ENCODE measurements at regions of chr1 and their contacts with region 1.

Region 1: DNA sequence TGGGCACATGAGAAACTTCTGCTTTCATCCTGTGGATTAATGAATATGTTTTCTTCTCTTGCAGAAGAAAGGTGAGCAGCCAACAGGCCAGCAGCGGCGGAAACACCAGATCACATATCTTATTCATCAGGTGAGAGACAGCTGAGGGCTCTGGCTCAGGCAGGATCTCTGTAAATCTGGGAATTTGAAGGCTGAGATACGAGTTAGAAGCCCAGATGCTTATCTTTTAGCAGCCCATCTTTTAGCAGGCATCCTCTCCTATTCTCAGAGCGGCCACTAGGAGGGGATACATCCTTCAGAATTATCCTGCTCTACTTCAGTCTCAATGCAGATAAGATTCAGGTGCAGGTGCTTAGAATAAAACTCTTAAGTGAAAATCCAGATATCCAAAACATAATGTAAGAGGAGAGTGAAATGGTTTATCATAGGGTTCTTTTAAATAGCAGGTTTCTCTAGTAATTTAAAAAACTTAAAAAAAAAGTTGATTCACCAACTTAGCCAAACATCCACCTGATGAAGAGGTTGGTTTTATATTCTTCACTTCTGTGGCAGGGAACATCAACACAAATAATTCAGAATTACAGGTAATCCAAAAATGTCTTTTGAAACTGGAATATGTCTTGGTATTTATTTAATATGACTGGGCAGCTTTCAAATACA is 19.3 kb downstream of the SH2D2A start:
- DNase-seq: peak; percentile 61
- H3K4me3 ChIP-seq: no peak overlapping the region
- H3K27ac ChIP-seq: no peak overlapping the region
- H3K4me1 ChIP-seq: peaks cover 15% of the 10 kb centered on the region
- CTCF ChIP-seq: peak; percentile 94

Region 2: GRCh38 chr1:156838981-156839410 is 41.7 kb after region 1 on chr1:
- CTCF ChIA-PET with region 1: no interaction called
- POLR2A ChIA-PET with region 1: no interaction called
- intact Hi-C with region 1: loop called (anchors 5 kb)
- DNase-seq: peak; percentile 45
- H3K4me3 ChIP-seq: no peak overlapping the region
- H3K27ac ChIP-seq: no peak overlapping the region
- H3K4me1 ChIP-seq: no peaks in the 10 kb centered on the region
- CTCF ChIP-seq: peak; percentile 94

Region 3: GRCh38 chr1:156860113-156860627 is 62.8 kb after region 1 on chr1:
- CTCF ChIA-PET with region 1: interaction called, 3 read pairs
- POLR2A ChIA-PET with region 1: no interaction called
- intact Hi-C with region 1: loop called (anchors 1 kb)
- DNase-seq: peak; percentile 63
- H3K4me3 ChIP-seq: peak overlapping the region; percentile 11
- H3K27ac ChIP-seq: no peak overlapping the region
- H3K4me1 ChIP-seq: peaks cover 4% of the 10 kb centered on the region
- CTCF ChIP-seq: peak; percentile 83

Measured in OCI-LY7 (cell line).